Naive thymus-derived CD4-positive, alpha-beta T cell (primary cell): ENCODE measurements at regions of chr21 and their contacts with region 1.

Region 1: DNA sequence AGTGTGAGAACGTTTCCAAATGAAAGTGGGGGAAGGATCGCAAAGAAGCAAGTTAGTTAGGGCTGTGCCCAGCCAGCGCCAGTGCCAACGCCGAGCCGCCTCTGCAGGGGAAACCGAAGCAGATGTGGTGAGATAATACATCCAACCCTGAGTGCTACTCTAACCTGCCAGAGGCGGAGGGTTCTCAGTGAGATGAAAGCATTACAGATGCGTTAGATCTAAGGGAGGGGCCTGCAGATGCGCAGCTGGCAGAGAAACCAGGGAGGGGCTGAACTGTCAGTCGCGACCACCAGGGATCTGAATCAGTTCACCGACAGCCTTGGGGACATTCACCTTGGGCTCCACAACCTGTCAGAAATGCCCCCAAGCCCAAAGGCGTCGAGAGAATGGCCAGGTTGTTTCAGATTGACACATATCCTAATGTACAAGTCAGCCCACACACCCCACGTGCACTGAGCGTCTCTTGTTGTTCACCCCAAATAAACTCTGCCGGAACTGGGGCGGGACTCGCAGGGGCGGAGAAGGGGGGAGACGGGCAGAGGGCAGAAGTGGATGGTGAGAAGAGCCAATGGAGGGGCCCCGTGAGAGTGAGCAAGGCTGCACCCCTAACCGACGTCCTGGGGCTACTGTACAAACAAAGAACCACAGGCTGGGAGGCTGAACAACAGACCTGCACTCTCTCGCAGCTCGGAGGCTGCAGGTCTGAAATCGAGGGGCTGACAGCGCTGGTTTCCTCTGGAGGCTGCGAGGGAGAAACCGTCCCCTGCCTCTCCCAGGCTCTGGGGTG is 8.7 kb upstream of the UMODL1 start:
- DNase-seq: peak; percentile 63 to 99 (median 97)
- ATAC-seq: peak; percentile 91
- H3K4me3 ChIP-seq: peak overlapping the region; percentile 64
- H3K4me3 Mint-ChIP-seq: peak overlapping the region; percentile 85 to 95 (median 92)
- H3K27ac ChIP-seq: peak overlapping the region; percentile 85
- H3K27ac Mint-ChIP-seq: peak overlapping the region; percentile 94 to 100 (median 99)
- H3K4me1 ChIP-seq: peaks cover 20 to 32% of the 10 kb centered on the region in 2 donors
- H3K4me1 Mint-ChIP-seq: peaks cover 28 to 76% (median 55%) of the 10 kb centered on the region in 7 donors
- H3K27me3 ChIP-seq: no peaks in the 10 kb centered on the region
- H3K27me3 Mint-ChIP-seq: peaks cover 0 to 5% (median 0%) of the 10 kb centered on the region in 5 donors

Region 2: GRCh38 chr21:41895643-41896493 is 166.6 kb before region 1 on chr21:
- CTCF ChIA-PET with region 1: interaction called, 6 read pairs
- POLR2A ChIA-PET with region 1: no interaction called
- intact Hi-C with region 1: loop called in 1 of 2 experiments (anchors 5 kb)
- DNase-seq: peak in 8 of 9 donors; percentile 18 to 72 (median 58)
- ATAC-seq: peak; percentile 94
- H3K4me3 ChIP-seq: no peak overlapping the region
- H3K4me3 Mint-ChIP-seq: peak overlapping the region in 8 of 10 donors; percentile 35 to 70 (median 51)
- H3K27ac ChIP-seq: no peak overlapping the region
- H3K27ac Mint-ChIP-seq: peak overlapping the region; percentile 34 to 91 (median 71)
- H3K4me1 ChIP-seq: peaks cover 4 to 16% of the 10 kb centered on the region in 2 donors
- H3K4me1 Mint-ChIP-seq: peaks cover 9 to 35% (median 21%) of the 10 kb centered on the region in 7 donors
- H3K27me3 ChIP-seq: no peaks in the 10 kb centered on the region
- H3K27me3 Mint-ChIP-seq: no peaks in the 10 kb centered on the region

Region 3: DNA sequence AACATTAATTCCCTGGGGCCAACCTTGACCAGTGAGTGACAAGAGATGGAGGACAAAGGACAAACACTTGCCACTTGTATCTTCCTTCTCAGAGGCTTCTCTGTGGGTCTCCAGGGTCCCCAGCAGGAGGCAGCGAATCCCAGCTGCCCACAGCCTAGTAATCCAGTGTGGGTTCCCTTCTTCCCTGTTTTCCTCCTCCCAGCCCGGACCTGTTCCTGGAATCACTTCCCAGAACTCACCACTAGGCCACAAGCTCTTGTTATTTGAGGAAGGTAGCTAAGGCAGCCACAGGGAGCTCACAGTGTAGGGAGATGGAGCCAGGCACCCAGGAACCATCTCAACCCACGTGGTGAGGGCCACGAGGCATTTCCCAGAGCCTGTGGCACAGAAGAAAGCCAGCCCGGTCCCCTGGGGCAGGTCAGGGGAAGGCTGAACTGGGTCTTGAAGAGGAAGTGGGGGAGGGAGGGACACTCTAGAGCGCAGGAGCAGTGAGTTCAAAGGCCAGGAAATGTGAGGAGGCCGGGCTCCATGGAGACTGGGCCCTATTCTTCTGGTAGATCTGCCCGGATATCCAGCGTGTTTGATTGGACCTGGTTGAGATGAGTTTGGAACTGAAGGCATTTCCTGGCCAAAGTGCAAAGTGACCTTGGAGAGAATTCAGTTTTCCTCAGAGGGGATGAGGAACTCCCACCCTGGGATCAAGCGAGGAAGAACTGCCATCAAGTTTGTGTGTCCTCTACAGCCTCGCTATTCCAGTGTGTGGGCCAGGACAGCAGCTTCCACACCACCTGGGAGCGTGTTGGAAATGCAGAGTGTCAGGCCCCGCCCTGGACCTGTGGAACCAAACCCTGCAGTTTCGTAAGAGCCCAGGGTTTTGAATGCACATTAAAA is 88.3 kb before region 1 on chr21:
- CTCF ChIA-PET with region 1: no interaction called
- POLR2A ChIA-PET with region 1: interaction called, 3 read pairs
- intact Hi-C with region 1: loop called in 1 of 2 experiments (anchors 1 kb)
- DNase-seq: peak in 6 of 9 donors; percentile 11 to 36 (median 26)
- ATAC-seq: peak; percentile 56
- H3K4me3 ChIP-seq: peak overlapping the region; percentile 28
- H3K4me3 Mint-ChIP-seq: peak overlapping the region; percentile 36 to 75 (median 66)
- H3K27ac ChIP-seq: no peak overlapping the region
- H3K27ac Mint-ChIP-seq: peak overlapping the region; percentile 14 to 83 (median 71)
- H3K4me1 ChIP-seq: peaks cover 0 to 20% of the 10 kb centered on the region in 2 donors
- H3K4me1 Mint-ChIP-seq: peaks cover 14 to 28% (median 18%) of the 10 kb centered on the region in 7 donors
- H3K27me3 ChIP-seq: peaks cover 0 to under 1% of the 10 kb centered on the region in 2 donors
- H3K27me3 Mint-ChIP-seq: peaks cover 0 to 2% (median 0%) of the 10 kb centered on the region in 5 donors

Region 4: GRCh38 chr21:42032968-42033367 is 29.5 kb before region 1 on chr21:
- CTCF ChIA-PET with region 1: no interaction called
- POLR2A ChIA-PET with region 1: no interaction called
- intact Hi-C with region 1: no loop called
- DNase-seq: no peak
- ATAC-seq: no peak
- H3K4me3 ChIP-seq: no peak overlapping the region
- H3K4me3 Mint-ChIP-seq: no peak overlapping the region
- H3K27ac ChIP-seq: no peak overlapping the region
- H3K27ac Mint-ChIP-seq: no peak overlapping the region
- H3K4me1 ChIP-seq: no peaks in the 10 kb centered on the region
- H3K4me1 Mint-ChIP-seq: peaks cover 0 to 10% (median 3%) of the 10 kb centered on the region in 7 donors
- H3K27me3 ChIP-seq: no peaks in the 10 kb centered on the region
- H3K27me3 Mint-ChIP-seq: no peaks in the 10 kb centered on the region

Region 5: DNA sequence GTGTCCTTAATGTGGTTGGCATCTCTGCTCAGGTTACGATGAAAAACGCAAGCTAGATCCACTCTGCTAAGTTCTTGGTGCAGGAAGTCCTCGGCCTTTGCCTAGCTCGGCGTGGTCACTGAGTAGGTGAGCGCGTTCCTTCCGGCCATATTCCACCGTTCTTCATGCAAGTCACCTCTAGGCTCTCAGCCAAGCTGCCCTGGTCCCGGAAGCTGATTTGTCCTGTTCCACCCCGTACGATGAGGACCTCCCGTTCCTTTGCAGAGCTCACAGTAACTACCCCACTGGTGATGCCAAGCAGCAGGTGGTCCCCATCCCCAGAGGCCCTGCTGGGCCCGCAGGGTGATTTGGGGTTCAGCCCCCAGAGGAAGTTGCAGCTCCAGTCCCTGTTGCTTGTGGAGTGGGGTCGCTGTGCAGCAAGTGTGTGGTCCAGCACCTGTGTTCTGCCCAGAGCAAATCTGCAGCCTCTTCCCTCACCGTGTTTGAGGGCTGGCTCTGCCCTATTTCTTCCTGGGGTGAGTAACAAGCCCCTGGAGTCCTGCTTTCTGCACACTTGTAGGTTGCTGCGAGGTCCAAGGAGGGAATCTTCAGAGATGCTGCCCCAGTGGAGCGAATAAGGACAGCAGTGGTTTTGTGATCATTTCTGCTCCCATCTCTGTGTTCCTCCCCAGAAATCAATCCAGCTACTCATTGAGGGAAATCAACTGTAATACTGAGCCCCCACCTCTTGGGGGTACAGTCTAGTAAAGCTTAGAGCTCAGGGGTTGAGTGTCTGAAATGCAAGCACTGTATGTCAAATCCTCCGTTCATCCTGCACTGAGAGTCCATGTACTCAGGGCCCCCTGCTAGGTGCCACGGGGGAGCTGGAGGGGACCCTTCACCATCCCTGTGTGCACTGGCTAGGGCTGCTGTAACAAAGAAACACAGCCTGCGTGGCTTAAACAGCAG is 11.0 kb after region 1 on chr21:
- CTCF ChIA-PET with region 1: no interaction called
- POLR2A ChIA-PET with region 1: interaction called, 12 read pairs
- intact Hi-C with region 1: no loop called
- DNase-seq: no peak
- ATAC-seq: no peak
- H3K4me3 ChIP-seq: no peak overlapping the region
- H3K4me3 Mint-ChIP-seq: peak overlapping the region in 2 of 10 donors; percentile 16 to 17
- H3K27ac ChIP-seq: no peak overlapping the region
- H3K27ac Mint-ChIP-seq: peak overlapping the region in 1 of 9 donors; percentile 21
- H3K4me1 ChIP-seq: no peaks in the 10 kb centered on the region
- H3K4me1 Mint-ChIP-seq: peaks cover 0 to 19% (median 8%) of the 10 kb centered on the region in 7 donors
- H3K27me3 ChIP-seq: no peaks in the 10 kb centered on the region
- H3K27me3 Mint-ChIP-seq: peaks cover 0 to 15% (median 0%) of the 10 kb centered on the region in 5 donors

Region 6: GRCh38 chr21:42107881-42108553 is 45.6 kb after region 1 on chr21:
- CTCF ChIA-PET with region 1: interaction called, 23 read pairs
- POLR2A ChIA-PET with region 1: interaction called, 45 read pairs
- intact Hi-C with region 1: loop called in 1 of 2 experiments (anchors 1 kb)
- DNase-seq: peak; percentile 46 to 82 (median 69)
- ATAC-seq: peak; percentile 97
- H3K4me3 ChIP-seq: peak overlapping the region; percentile 11
- H3K4me3 Mint-ChIP-seq: peak overlapping the region; percentile 34 to 84 (median 76)
- H3K27ac ChIP-seq: peak overlapping the region; percentile 38
- H3K27ac Mint-ChIP-seq: peak overlapping the region in 8 of 9 donors; percentile 11 to 82 (median 73)
- H3K4me1 ChIP-seq: peaks cover 0 to 15% of the 10 kb centered on the region in 2 donors
- H3K4me1 Mint-ChIP-seq: peaks cover 0 to 28% (median 10%) of the 10 kb centered on the region in 7 donors
- H3K27me3 ChIP-seq: no peaks in the 10 kb centered on the region
- H3K27me3 Mint-ChIP-seq: peaks cover 0 to 4% (median 0%) of the 10 kb centered on the region in 5 donors

Region 7: DNA sequence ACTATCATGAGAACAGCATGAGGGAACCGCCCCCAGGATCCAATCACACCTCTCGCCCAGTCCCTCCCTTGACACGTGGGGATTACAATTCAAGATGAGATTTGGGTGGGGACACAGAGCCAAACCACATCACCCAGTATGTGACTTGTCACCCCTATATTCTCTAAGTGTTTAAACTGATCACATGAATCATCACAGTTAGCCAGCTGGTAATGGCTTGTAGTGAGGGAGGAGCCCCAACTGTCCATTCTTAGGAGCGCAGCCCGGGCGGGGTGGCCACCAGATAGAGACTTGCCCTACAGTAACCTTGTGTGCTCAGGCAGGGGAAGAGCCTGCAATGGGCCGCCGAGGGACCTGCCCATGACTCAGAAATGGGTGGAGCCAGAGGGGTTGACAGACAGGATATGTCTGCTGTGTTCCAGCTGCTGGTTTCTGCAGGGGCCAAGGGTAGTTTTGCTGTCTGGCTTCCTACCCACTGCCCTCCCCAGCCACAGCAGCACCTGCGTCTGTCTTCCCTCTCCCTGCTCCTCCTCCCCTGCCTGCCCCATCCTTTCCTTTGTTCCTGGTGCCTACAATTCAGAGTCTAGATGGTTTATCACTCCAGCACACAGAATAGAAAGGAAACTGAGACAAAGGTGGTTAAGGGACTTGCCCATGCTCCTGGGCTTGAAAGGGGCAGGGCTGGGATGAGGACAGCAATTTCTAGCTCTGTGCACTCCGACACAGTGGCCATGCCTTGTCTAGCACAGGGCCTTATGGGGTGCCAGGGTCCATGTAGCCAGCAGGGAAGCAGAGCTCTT is 165.7 kb after region 1 on chr21:
- CTCF ChIA-PET with region 1: no interaction called
- POLR2A ChIA-PET with region 1: no interaction called
- intact Hi-C with region 1: loop called (anchors 2 to 10 kb)
- DNase-seq: peak; percentile 72 to 97 (median 80)
- ATAC-seq: peak; percentile 94
- H3K4me3 ChIP-seq: peak overlapping the region; percentile 29
- H3K4me3 Mint-ChIP-seq: peak overlapping the region; percentile 47 to 77 (median 70)
- H3K27ac ChIP-seq: peak overlapping the region; percentile 71
- H3K27ac Mint-ChIP-seq: peak overlapping the region; percentile 78 to 96 (median 90)
- H3K4me1 ChIP-seq: peaks cover 44 to 45% of the 10 kb centered on the region in 2 donors
- H3K4me1 Mint-ChIP-seq: peaks cover 41 to 92% (median 86%) of the 10 kb centered on the region in 7 donors
- H3K27me3 ChIP-seq: no peaks in the 10 kb centered on the region
- H3K27me3 Mint-ChIP-seq: no peaks in the 10 kb centered on the region